ENCODE measurements at regions of chr21 and their contacts with region 1.

Region 1: GRCh38 chr21:26170471-26171257 is at the start of gene APP:
- DNase-seq: peak; percentile 91
- H3K4me3 Mint-ChIP-seq: peak within 1 kb of the TSS; percentile 88
- H3K27ac Mint-ChIP-seq: peak within 1 kb of the TSS; percentile 44
- H3K4me1 Mint-ChIP-seq: peaks cover 15% of the 10 kb centered on the region
- H3K27me3 Mint-ChIP-seq: peaks cover 2% of the 10 kb centered on the region
- total RNA-seq, gene APP: 46.3 to 47.1 TPM

Region 2: DNA sequence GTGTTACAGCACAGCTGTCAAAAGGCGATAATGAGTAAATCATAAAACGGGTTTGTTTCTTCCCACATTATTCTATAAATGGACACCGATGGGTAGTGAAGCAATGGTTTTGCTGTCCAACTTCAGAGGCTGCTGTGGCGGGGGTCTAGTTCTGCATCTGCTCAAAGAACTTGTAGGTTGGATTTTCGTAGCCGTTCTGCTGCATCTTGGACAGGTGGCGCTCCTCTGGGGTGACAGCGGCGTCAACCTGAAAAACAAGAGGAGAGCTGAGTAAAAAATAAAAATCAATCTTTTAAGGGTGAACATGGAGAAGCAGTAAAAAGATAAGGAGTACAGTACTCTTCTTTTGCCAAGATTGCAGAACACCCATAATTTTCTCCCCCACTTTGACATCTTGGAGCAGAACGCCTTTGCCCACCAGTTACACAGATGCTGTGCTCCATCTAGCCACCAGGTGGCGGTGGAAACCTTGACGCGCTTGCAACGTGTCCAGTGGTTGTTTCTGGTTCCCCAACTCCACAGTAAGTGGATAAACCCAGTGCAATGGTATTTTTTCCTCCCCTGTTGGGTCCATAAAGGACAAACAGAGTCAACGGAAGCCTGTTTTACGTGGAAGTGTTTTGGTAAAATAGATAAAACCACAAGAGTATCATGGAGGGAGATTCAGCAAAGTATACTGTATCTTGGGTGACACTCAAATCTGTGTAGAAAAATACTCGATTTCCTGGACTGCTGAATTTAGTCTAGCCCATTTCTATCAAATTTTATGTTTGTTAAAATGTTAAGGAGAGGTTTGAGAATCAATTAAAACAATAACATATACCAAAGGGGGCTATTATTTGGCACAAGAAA is 288.9 kb before region 1 on chr21:
- CTCF ChIA-PET with region 1: interaction called, 9 read pairs
- POLR2A ChIA-PET with region 1: no interaction called
- intact Hi-C with region 1: loop called (anchors 1 kb)
- DNase-seq: peak; percentile 71
- H3K4me3 Mint-ChIP-seq: no peak overlapping the region
- H3K27ac Mint-ChIP-seq: no peak overlapping the region
- H3K4me1 Mint-ChIP-seq: no peaks in the 10 kb centered on the region
- H3K27me3 Mint-ChIP-seq: no peaks in the 10 kb centered on the region

Region 3: DNA sequence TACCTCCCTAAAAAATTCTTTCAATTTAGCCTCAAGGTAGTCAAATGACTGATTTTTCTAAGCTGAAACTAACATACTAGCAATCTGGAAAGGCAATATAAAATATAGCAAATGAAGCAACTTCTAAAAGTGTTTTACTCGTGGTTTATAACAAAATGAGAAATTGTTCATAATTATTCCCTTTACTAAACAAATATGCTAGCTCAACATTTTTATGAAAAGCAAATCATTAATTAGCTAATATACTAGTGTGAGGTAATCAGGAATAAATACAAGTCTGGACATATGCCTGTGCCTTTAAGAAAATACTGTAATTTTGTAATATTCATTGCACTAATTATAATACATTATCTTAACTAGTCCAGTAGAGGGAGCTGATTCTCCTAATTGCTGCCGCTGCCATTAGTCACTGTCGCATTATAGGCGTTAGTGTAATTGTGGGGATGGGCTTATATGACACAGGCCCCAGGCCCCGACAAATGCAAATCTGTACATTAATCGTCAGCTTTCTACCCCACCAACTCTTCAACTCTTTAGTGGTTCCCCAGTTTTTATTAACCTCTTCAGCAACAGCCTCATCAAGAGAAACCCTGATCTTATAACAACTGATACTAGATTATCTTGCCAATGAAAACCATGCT is 275.0 kb before region 1 on chr21:
- CTCF ChIA-PET with region 1: interaction called, 9 read pairs
- POLR2A ChIA-PET with region 1: no interaction called
- intact Hi-C with region 1: loop called (anchors 1 kb)
- DNase-seq: peak; percentile 17
- H3K4me3 Mint-ChIP-seq: no peak overlapping the region
- H3K27ac Mint-ChIP-seq: no peak overlapping the region
- H3K4me1 Mint-ChIP-seq: no peaks in the 10 kb centered on the region
- H3K27me3 Mint-ChIP-seq: no peaks in the 10 kb centered on the region

Region 4: GRCh38 chr21:25970254-25970930 is 200.3 kb before region 1 on chr21:
- CTCF ChIA-PET with region 1: no interaction called
- POLR2A ChIA-PET with region 1: no interaction called
- intact Hi-C with region 1: loop called (anchors 10 kb)
- DNase-seq: no peak
- H3K4me3 Mint-ChIP-seq: no peak overlapping the region
- H3K27ac Mint-ChIP-seq: no peak overlapping the region
- H3K4me1 Mint-ChIP-seq: peaks cover 8% of the 10 kb centered on the region
- H3K27me3 Mint-ChIP-seq: no peaks in the 10 kb centered on the region

Region 5: GRCh38 chr21:26070822-26071425 is 99.7 kb before region 1 on chr21:
- CTCF ChIA-PET with region 1: interaction called, 4 read pairs
- POLR2A ChIA-PET with region 1: no interaction called
- intact Hi-C with region 1: loop called (anchors 2 kb)
- DNase-seq: peak; percentile 39
- H3K4me3 Mint-ChIP-seq: peak overlapping the region; percentile 56
- H3K27ac Mint-ChIP-seq: peak overlapping the region; percentile 67
- H3K4me1 Mint-ChIP-seq: peaks cover 44% of the 10 kb centered on the region
- H3K27me3 Mint-ChIP-seq: no peaks in the 10 kb centered on the region